Caco-2 (cell line): ENCODE measurements at regions of chr18 and their contacts with region 1.

Region 1: GRCh38 chr18:74517236-74517630 is 17.1 kb upstream of the CNDP1 start:
- DNase-seq: peak; percentile 81 to 93
- H3K4me3 ChIP-seq: no peak overlapping the region
- H3K4me3 Mint-ChIP-seq: peak overlapping the region; percentile 45
- H3K27ac Mint-ChIP-seq: peak overlapping the region; percentile 96
- H3K4me1 ChIP-seq: peaks cover 33% of the 10 kb centered on the region
- H3K4me1 Mint-ChIP-seq: peaks cover 6% of the 10 kb centered on the region
- H3K27me3 ChIP-seq: no peaks in the 10 kb centered on the region
- H3K27me3 Mint-ChIP-seq: no peaks in the 10 kb centered on the region
- CTCF ChIP-seq: no peak

Region 2: DNA sequence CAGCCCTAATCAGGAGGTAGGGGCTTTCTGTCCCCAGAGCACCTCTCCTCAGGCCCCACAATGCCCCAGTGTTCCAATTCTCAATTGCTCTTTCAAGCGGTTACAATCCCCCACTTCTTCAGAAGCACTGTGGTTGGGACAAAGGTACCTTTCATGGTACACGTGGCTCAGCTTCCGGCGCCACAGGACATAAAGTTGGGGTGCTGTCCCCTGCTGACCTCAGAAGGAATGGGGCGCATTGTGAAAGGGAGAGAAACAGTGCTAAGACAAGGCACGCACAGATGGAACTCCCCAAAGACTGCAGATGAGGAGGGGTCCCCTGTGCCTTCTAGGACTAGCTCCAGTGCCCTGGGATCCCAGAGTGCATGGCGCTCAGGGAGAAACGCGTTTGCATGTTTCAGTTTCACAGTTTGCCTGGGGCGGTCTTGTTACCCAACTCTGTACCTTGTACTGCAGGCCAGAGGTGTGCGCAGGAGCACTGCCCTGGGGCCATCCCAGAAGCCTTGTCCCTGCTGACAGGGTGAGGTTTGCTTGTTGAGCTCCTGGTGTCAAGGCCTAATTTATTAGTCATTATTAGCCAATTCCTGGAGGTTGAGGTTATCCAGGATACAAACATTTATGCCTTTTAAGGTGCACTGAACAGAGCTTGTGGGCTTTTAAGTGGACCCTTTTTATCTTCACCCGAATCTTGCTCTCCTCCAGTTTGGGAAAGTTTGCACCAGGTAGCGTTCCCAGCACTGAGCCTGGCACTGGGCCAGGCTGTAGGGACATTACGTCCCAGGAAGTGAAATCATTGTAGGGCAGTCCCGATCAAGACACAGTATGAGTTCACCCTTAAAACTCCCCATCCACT is 24.7 kb after region 1 on chr18:
- CTCF ChIA-PET with region 1: interaction called, 7 read pairs
- POLR2A ChIA-PET with region 1: interaction called, 7 read pairs
- intact Hi-C with region 1: loop called (anchors 1 kb)
- DNase-seq: peak; percentile 83 to 91
- H3K4me3 ChIP-seq: no peak overlapping the region
- H3K4me3 Mint-ChIP-seq: no peak overlapping the region
- H3K27ac Mint-ChIP-seq: no peak overlapping the region
- H3K4me1 ChIP-seq: peaks cover 26% of the 10 kb centered on the region
- H3K4me1 Mint-ChIP-seq: no peaks in the 10 kb centered on the region
- H3K27me3 ChIP-seq: no peaks in the 10 kb centered on the region
- H3K27me3 Mint-ChIP-seq: no peaks in the 10 kb centered on the region
- CTCF ChIP-seq: no peak